Panc1 (cell line): ENCODE measurements at regions of chr6 and their contacts with region 1.

Region 1: GRCh38 chr6:36419310-36419709 is 23.3 kb downstream of the PXT1 start:
- DNase-seq: no peak
- ATAC-seq: no peak
- H3K4me3 ChIP-seq: no peak overlapping the region
- H3K27ac ChIP-seq: no peak overlapping the region
- H3K4me1 ChIP-seq: 0 out of 2 replicates have a peak, but pooled peaks cover 5% of the 10 kb centered on the region
- H3K27me3 ChIP-seq: no peaks in the 10 kb centered on the region
- CTCF ChIP-seq: no peak

Region 2: DNA sequence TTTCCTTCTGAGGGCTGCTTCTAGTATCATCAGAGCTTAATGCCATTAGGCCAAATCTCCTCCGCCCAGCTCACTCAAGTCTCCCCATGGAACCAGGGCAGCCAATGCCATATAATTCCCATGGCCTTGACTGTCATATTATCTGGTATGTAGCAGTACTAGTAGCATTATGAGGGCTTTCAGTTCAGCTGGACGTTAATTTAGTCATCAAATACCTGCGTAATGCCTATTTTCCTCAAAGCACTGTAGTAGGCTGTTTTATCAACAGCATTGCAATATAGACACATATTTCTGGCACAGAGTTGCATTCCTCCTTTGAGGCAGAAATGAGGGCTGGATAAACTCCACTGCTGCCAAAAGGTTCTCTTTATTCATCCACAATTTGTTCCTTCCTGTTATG is 25.2 kb after region 1 on chr6:
- CTCF ChIA-PET with region 1: no interaction called
- POLR2A ChIA-PET with region 1: interaction called, 17 read pairs
- in situ Hi-C with region 1: no loop called
- intact Hi-C with region 1: no loop called
- DNase-seq: no peak
- ATAC-seq: no peak
- H3K4me3 ChIP-seq: peak overlapping the region; percentile 84 to 92
- H3K27ac ChIP-seq: peak overlapping the region; percentile 95
- H3K4me1 ChIP-seq: peaks cover 26% of the 10 kb centered on the region
- H3K27me3 ChIP-seq: no peaks in the 10 kb centered on the region
- CTCF ChIP-seq: no peak